Aorta (tissue), 5 donors: ENCODE measurements at regions of chr12 and their contacts with region 1.

Region 1: GRCh38 chr12:112185093-112185923 is 59.9 kb downstream of the TRAFD1 start:
- DNase-seq: no peak
- ATAC-seq: no peak
- H3K4me3 ChIP-seq: no peak overlapping the region
- H3K27ac ChIP-seq: no peak overlapping the region
- H3K4me1 ChIP-seq: no peaks in the 10 kb centered on the region
- H3K27me3 ChIP-seq: no peaks in the 10 kb centered on the region

Region 2: DNA sequence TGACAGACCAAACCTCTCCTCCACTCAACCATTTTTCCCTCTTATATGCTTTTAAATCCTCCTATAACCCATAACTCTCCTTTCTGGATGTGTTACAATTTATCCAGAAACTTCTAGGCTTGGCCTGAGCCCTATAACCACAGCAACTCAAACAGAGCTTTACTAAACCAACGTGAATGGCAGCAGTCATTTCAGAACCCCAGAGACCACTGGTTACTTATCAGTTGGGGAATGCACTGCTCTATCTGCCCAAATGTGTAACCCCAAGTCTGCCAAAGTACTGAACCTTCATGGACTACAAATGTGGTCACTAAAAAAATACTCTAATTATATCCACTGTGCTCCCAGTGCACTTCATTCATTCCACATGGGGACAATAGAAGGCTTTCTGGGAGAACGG is 118.7 kb before region 1 on chr12:
- intact Hi-C with region 1: loop called in 1 of 2 experiments (anchors 5 kb)
- DNase-seq: no peak
- ATAC-seq: no peak
- H3K4me3 ChIP-seq: no peak overlapping the region
- H3K27ac ChIP-seq: no peak overlapping the region
- H3K4me1 ChIP-seq: no peaks in the 10 kb centered on the region
- H3K27me3 ChIP-seq: no peaks in the 10 kb centered on the region

Region 3: DNA sequence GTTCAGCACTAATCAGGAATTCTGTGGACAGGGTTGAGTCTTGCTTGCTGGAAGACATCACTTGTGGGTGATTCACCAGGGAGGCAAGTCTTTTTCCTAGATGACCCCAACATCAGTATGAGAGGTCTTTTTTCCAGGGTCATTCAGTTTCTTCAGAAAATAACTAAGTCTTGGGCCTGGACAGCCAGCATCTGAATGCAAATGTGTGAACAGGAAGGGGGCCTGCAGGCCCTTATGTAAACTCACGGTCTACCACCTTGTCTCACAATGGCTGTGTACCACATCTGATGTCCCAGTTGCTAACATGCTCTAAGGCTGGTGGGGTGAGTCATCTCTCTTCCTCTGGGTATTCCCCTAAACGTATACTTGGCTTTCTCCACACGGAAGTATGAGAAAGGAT is 117.7 kb after region 1 on chr12:
- intact Hi-C with region 1: no loop called
- DNase-seq: no peak
- ATAC-seq: no peak
- H3K4me3 ChIP-seq: no peak overlapping the region
- H3K27ac ChIP-seq: no peak overlapping the region
- H3K4me1 ChIP-seq: no peaks in the 10 kb centered on the region
- H3K27me3 ChIP-seq: no peaks in the 10 kb centered on the region